MCF 10A (cell line): ENCODE measurements at regions of chr22 and their contacts with region 1.

Region 1: DNA sequence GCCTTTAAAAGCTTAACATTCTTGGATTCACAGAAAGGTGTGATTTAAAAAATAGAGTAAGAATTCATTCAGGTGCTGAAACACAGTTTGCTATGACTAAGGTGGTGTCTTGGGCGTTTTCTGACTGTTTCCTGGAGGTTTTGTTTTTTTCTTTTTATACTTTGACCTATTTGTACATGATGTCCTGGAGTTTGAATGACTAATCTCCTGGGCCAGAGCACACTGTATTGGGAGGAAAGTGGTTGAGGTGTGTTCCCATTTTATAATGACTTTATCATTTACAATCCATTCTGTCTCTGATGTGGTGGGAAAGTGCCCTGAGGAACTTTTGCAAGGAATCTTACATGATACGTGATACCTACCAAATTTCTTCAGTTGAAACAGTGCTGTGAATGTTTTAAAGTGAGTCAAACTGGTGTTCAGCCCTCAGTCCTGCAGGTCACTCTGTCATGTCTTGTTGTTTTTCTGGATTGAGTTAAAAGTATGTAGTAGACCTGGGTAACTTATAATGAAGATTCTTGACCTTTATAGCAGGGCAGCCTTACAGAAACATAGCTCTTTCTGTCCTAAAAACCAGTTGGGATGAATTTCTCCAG is 80.8 kb downstream of the TNRC6B start:
- DNase-seq: peak; percentile 91
- H3K4me3 Mint-ChIP-seq: peak overlapping the region; percentile 51
- H3K27ac Mint-ChIP-seq: peak overlapping the region; percentile 93
- H3K4me1 Mint-ChIP-seq: peaks cover 44% of the 10 kb centered on the region
- H3K27me3 Mint-ChIP-seq: no peaks in the 10 kb centered on the region
- CTCF ChIP-seq: no peak

Region 2: GRCh38 chr22:40070701-40071100 is 187.8 kb before region 1 on chr22:
- CTCF ChIA-PET with region 1: no interaction called
- POLR2A ChIA-PET with region 1: no interaction called
- intact Hi-C with region 1: no loop called
- DNase-seq: no peak
- H3K4me3 Mint-ChIP-seq: no peak overlapping the region
- H3K27ac Mint-ChIP-seq: no peak overlapping the region
- H3K4me1 Mint-ChIP-seq: no peaks in the 10 kb centered on the region
- H3K27me3 Mint-ChIP-seq: no peaks in the 10 kb centered on the region
- CTCF ChIP-seq: no peak

Region 3: GRCh38 chr22:40238425-40239344 is 19.9 kb before region 1 on chr22:
- CTCF ChIA-PET with region 1: interaction called, 6 read pairs
- POLR2A ChIA-PET with region 1: interaction called, 13 read pairs
- intact Hi-C with region 1: no loop called
- DNase-seq: peak; percentile 89
- H3K4me3 Mint-ChIP-seq: peak overlapping the region; percentile 50
- H3K27ac Mint-ChIP-seq: peak overlapping the region; percentile 24
- H3K4me1 Mint-ChIP-seq: peaks cover 61% of the 10 kb centered on the region
- H3K27me3 Mint-ChIP-seq: no peaks in the 10 kb centered on the region
- CTCF ChIP-seq: no peak

Region 4: GRCh38 chr22:40270748-40271373 is 12.3 kb after region 1 on chr22:
- CTCF ChIA-PET with region 1: interaction called, 3 read pairs
- POLR2A ChIA-PET with region 1: interaction called, 12 read pairs
- intact Hi-C with region 1: no loop called
- DNase-seq: no peak
- H3K4me3 Mint-ChIP-seq: no peak overlapping the region
- H3K27ac Mint-ChIP-seq: peak overlapping the region; percentile 70
- H3K4me1 Mint-ChIP-seq: peaks cover 5% of the 10 kb centered on the region
- H3K27me3 Mint-ChIP-seq: no peaks in the 10 kb centered on the region
- CTCF ChIP-seq: no peak

Region 5: DNA sequence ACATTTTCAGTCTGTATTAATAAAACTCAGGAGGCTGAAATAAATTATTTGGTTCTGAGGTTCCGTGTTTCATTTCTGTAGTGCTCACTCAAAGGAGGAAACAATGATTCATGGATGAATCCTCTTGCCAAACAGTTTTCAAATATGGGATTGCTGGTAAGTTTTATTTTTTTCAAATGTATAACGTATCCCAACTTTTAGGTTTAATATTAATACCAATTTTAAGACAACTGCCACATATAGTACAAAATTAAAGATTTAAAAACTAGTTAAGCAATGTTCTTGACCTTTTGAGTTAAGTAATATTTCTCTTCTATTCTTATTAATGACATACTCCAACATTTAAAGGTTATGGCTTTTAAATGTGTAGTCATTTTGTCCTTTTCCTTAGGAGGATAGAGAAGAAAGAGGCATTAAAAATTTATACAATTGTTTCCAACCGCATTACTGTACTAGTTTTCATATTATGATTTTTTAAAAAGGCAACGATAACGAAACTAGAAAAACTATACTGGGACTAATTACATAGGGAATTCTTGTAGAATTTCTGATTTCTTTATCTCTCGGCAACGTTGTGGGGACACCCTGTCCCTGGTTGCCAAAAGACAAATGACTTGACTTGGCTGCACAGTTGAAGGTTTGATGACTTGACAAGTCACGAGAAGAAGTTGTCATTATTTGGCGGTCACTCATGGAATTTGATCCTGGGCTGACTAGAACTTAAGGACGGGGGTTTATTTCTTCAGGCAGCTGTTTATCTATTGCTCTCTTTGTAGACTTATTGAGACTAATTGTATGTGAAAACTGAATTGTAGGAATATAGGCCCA is 18.7 kb after region 1 on chr22:
- CTCF ChIA-PET with region 1: interaction called, 3 read pairs
- POLR2A ChIA-PET with region 1: interaction called, 11 read pairs
- intact Hi-C with region 1: no loop called
- DNase-seq: peak; percentile 43
- H3K4me3 Mint-ChIP-seq: peak overlapping the region; percentile 74
- H3K27ac Mint-ChIP-seq: peak overlapping the region; percentile 95
- H3K4me1 Mint-ChIP-seq: peaks cover 23% of the 10 kb centered on the region
- H3K27me3 Mint-ChIP-seq: no peaks in the 10 kb centered on the region
- CTCF ChIP-seq: no peak